ENCODE measurements at regions of chr6 and their contacts with region 1.

Region 1: DNA sequence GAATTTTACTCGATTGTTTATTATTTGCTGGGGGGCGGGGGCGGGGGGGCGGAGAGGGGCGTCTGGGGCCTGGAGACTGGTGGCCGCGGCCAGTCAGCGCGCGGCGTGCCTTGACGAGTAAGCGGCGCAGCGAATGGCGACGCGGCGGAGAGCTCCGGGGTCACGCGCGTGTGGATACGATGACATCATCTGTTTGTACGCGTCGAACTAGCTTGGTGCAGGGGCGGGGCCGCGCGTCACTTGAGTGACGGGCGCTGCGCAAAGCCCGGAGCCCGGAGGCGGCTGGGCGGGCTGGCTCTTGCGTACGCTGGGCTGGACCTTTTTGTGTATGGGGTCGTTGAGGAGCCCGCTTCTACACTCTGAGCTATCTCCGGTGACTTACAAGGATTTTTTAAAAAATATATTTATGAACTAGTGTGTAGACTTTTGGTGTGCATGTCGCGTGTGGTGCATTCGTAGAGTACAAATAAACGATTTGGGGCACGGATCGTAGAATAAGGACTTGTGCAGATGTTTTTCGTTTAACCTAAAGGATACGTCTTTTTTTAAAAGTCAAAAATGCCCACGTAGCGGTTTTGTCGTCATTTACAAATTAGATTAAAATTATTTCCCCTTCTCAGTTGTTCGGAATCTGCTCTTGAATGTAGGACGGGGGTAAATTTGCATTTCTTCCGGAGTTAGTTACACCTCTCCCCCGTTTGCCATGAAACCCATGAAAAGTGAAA is 2.2 kb upstream of the FOXO3 start:
- DNase-seq: peak; percentile 99
- H3K4me3 Mint-ChIP-seq: peak overlapping the region; percentile 88
- H3K27ac Mint-ChIP-seq: peak overlapping the region; percentile 93
- H3K4me1 Mint-ChIP-seq: peaks cover 19% of the 10 kb centered on the region
- H3K27me3 Mint-ChIP-seq: peaks cover 44% of the 10 kb centered on the region

Region 2: DNA sequence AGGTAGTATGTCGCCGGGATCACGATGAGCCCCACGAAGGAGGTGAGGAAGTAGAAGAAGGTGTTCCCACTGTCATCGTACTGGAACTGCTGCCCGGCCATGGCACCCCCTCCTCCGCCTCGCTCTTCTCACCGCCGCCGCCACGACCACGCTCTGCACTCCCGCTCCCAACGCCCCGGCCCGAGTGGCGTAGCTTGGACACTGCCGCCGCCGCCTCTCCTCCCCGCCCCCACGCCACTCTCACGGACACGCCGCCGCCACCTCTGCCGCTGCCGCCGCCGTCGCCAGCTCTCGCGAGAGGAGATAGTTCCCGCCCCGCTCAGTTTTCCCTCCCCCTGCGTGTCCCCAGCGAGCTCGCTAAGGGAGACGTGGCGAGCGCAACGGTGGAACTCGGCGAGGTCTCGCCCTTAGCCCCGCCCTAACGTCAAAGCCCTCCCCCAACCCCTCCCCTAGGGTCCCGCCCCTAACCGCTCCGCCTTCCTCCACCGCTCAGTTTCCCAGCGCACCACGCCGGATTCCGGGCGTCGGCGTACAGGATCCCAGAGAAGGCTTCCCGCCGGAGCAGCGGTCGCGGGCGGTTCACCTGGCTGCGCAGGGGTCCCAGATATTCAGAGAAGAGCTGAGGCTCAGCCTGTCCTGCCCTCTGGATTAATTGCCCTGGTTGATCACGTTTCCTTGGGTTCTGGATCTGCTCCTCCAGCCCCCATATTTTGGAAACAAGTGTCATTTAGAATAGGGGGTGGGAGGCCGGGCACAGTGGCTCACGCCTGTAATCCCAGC is 600.4 kb before region 1 on chr6 and contains the start of gene SEC63:
- intact Hi-C with region 1: loop called (anchors 2 kb)
- DNase-seq: peak; percentile 99
- H3K4me3 Mint-ChIP-seq: peak within 1 kb of the TSS; percentile 98
- H3K27ac Mint-ChIP-seq: peak within 1 kb of the TSS; percentile 99
- H3K4me1 Mint-ChIP-seq: peaks cover 22% of the 10 kb centered on the region
- H3K27me3 Mint-ChIP-seq: peaks cover 5% of the 10 kb centered on the region
- total RNA-seq, gene SEC63: 91.8 and 94.4 TPM in 2 replicates

Region 3: GRCh38 chr6:108105571-108105970 is 453.0 kb before region 1 on chr6:
- intact Hi-C with region 1: no loop called
- DNase-seq: no peak
- H3K4me3 Mint-ChIP-seq: no peak overlapping the region
- H3K27ac Mint-ChIP-seq: no peak overlapping the region
- H3K4me1 Mint-ChIP-seq: no peaks in the 10 kb centered on the region
- H3K27me3 Mint-ChIP-seq: peaks cover 46% of the 10 kb centered on the region

Region 4: DNA sequence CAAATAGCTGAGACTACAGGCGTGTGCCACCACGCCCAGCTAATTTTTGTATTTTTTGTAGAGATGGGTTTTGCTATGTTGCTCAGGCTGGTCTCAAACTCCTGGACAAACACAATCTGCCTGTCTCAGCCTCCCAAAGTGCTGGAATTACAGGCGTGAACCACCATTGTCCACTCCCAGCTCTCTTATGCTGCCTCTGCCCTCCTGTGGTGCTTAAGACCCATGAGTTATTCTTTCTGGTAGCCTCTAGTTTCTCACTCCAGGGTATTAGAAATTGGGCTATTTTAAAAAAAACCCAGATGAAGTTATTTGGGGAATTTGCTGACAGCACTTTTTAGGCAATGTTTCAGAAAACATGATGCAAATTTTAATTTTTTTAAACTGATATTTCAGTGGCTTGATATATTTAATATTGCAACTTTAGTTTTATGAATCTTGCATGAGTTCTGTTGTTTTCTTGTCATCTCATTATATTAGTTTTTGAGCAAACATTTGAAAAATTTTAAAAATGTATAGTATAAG is 111.8 kb before region 1 on chr6:
- intact Hi-C with region 1: no loop called
- DNase-seq: no peak
- H3K4me3 Mint-ChIP-seq: no peak overlapping the region
- H3K27ac Mint-ChIP-seq: no peak overlapping the region
- H3K4me1 Mint-ChIP-seq: peaks cover 10% of the 10 kb centered on the region
- H3K27me3 Mint-ChIP-seq: peaks cover 45% of the 10 kb centered on the region

Region 5: GRCh38 chr6:108782179-108783041 is 223.9 kb after region 1 on chr6:
- intact Hi-C with region 1: loop called (anchors 1 kb)
- DNase-seq: peak; percentile 93
- H3K4me3 Mint-ChIP-seq: peak overlapping the region; percentile 82
- H3K27ac Mint-ChIP-seq: no peak overlapping the region
- H3K4me1 Mint-ChIP-seq: peaks cover 11% of the 10 kb centered on the region
- H3K27me3 Mint-ChIP-seq: peaks cover 63% of the 10 kb centered on the region

Region 6: DNA sequence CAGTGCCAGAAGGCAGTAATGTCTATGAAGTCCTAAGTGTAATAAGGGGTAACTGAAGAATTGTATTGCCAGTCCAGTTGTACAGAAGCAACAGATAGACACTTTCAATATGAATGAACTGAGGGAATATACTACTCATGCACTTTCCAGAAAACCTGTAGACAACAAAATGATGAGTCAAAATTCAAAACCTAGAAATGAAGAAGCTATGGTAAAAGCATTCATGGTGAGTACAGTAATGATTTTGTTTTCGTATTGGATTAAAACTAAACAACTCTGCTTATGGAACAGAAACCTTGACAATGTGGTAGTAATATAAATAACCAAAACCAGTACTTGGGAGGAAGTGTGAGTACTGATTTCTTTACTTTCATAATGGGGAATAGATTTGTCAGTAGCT is 324.6 kb after region 1 on chr6:
- intact Hi-C with region 1: loop called (anchors 1 kb)
- DNase-seq: no peak
- H3K4me3 Mint-ChIP-seq: peak overlapping the region; percentile 24
- H3K27ac Mint-ChIP-seq: peak overlapping the region; percentile 87
- H3K4me1 Mint-ChIP-seq: peaks cover 31% of the 10 kb centered on the region
- H3K27me3 Mint-ChIP-seq: peaks cover 28% of the 10 kb centered on the region

Region 7: GRCh38 chr6:108944707-108945680 is 386.5 kb after region 1 on chr6:
- intact Hi-C with region 1: loop called (anchors 2 kb)
- DNase-seq: no peak
- H3K4me3 Mint-ChIP-seq: peak overlapping the region; percentile 27
- H3K27ac Mint-ChIP-seq: peak overlapping the region; percentile 34
- H3K4me1 Mint-ChIP-seq: peaks cover 57% of the 10 kb centered on the region
- H3K27me3 Mint-ChIP-seq: no peaks in the 10 kb centered on the region

Region 8: GRCh38 chr6:109073344-109074132 is 515.0 kb after region 1 on chr6:
- intact Hi-C with region 1: loop called (anchors 5 kb)
- DNase-seq: peak; percentile 88
- H3K4me3 Mint-ChIP-seq: no peak overlapping the region
- H3K27ac Mint-ChIP-seq: no peak overlapping the region
- H3K4me1 Mint-ChIP-seq: peaks cover 17% of the 10 kb centered on the region
- H3K27me3 Mint-ChIP-seq: peaks cover 10% of the 10 kb centered on the region

Region 9: DNA sequence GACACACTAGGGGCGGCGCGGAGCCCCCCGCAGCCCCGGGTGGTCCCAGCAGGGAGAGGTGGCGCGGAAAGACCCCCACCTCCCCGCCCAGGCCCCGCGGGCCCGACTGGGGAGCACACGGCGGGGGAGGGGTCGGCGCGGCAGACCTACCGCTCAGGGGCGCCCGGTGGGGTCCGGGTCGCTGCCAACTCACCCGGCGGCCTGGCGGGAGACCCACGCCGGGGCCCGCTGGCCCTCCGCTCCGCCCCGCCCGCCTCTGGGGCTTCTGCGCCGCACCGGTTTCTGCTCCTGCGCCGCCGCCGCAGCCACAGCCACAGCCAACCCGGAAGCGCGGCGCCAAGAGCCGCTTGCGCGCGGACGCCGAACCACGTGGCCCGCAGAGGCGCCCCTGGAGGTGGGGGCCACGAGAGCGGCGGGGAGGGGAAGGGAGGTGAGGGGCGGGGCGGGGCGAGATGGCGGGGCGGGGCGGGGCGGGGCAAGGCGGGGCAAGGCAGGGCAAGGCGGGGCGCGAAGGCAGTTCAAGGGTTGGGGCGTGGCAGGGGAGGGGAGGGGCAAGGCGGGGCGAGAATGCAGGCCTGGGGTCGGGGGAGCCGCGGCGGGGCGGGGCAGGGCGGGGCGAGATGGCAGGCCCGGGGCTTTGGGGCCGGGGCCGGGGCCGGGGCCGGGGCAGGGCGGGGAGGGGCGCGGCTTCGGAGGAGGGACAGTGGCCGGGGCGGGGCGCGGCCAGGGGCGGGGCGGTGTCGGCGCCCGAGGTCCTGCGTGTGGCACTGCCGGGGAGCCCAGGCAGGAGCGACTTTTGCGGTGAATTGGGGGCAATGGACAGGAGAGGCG is 924.6 kb after region 1 on chr6 and contains the start of gene ZBTB24:
- intact Hi-C with region 1: loop called (anchors 10 kb)
- DNase-seq: peak; percentile 97
- H3K4me3 Mint-ChIP-seq: peak within 1 kb of the TSS; percentile 97
- H3K27ac Mint-ChIP-seq: peak within 1 kb of the TSS; percentile 93
- H3K4me1 Mint-ChIP-seq: peaks cover 41% of the 10 kb centered on the region
- H3K27me3 Mint-ChIP-seq: peaks cover 3% of the 10 kb centered on the region
- total RNA-seq, gene ZBTB24: 18.9 and 19.6 TPM in 2 replicates